Right cardiac atrium (tissue), 5 donors: ENCODE measurements at regions of chr3 and their contacts with region 1.

Region 1: GRCh38 chr3:82133070-82133606 is 371.7 kb upstream of the GBE1 start:
- DNase-seq: peak; percentile 41 to 74 (median 66)
- ATAC-seq: peak; percentile 63 to 79
- H3K4me3 ChIP-seq: no peak overlapping the region
- H3K27ac ChIP-seq: no peak overlapping the region
- H3K4me1 ChIP-seq: no peaks in the 10 kb centered on the region
- H3K27me3 ChIP-seq: no peaks in the 10 kb centered on the region

Region 2: GRCh38 chr3:81666493-81667121 is 466.5 kb before region 1 on chr3:
- intact Hi-C with region 1: loop called in 3 of 4 experiments (anchors 10 kb)
- DNase-seq: no peak
- ATAC-seq: no peak
- H3K4me3 ChIP-seq: no peak overlapping the region
- H3K27ac ChIP-seq: no peak overlapping the region
- H3K4me1 ChIP-seq: peaks cover 2% of the 10 kb centered on the region
- H3K27me3 ChIP-seq: no peaks in the 10 kb centered on the region